Transverse colon (tissue), 4 donors: ENCODE measurements at regions of chr3 and their contacts with region 1.

Region 1: DNA sequence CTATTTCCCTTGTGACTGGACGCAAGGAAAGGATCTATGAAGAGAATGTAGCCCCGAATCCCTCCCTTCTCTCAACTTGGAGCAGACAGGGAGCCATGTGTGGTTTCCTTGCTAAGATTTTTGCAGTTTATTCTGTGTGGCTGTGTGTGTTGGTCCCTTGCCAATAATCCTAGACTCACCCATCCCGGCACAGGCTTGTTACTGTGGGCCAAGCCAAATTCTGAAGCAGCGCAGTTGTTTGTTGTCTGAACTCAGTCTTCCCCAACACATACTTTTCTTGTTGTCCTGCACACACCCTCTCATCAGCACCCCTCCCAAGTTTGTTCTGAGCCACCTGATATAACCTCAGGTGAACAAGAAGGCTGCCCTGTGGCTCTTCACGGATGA is 193.3 kb upstream of the CTDSPL start:
- DNase-seq: no peak
- H3K4me3 ChIP-seq: no peak overlapping the region
- H3K27ac ChIP-seq: peak overlapping the region in 1 of 4 donors; percentile 21
- H3K4me1 ChIP-seq: peaks cover 16 to 30% (median 22%) of the 10 kb centered on the region in 4 donors
- H3K27me3 ChIP-seq: no peaks in the 10 kb centered on the region
- CTCF ChIP-seq: no peak
- EP300 ChIP-seq: no peak
- POLR2A ChIP-seq: no peak

Region 2: GRCh38 chr3:38247366-38248035 is 579.1 kb after region 1 on chr3:
- in situ Hi-C with region 1: no loop called
- intact Hi-C with region 1: loop called (anchors 10 kb)
- DNase-seq: no peak
- H3K4me3 ChIP-seq: no peak overlapping the region
- H3K27ac ChIP-seq: no peak overlapping the region
- H3K4me1 ChIP-seq: peaks cover 0 to 8% (median 0%) of the 10 kb centered on the region in 4 donors
- H3K27me3 ChIP-seq: no peaks in the 10 kb centered on the region
- CTCF ChIP-seq: no peak
- EP300 ChIP-seq: no peak
- POLR2A ChIP-seq: no peak